Activated CD4-positive, alpha-beta T cell treated with anti-CD3 and anti-CD28 coated beads, Interleukin-2, amount 10 ng/mL, durations not matched to agents 24 days and 14 days (primary cell): ENCODE measurements at regions of chr22 and their contacts with region 1.

Region 1: GRCh38 chr22:50537765-50538164 is 7.9 kb upstream of the KLHDC7B start:
- DNase-seq: no peak
- H3K4me3 Mint-ChIP-seq: peak overlapping the region; percentile 55
- H3K27ac Mint-ChIP-seq: peak overlapping the region; percentile 99
- H3K4me1 Mint-ChIP-seq: peaks cover 75% of the 10 kb centered on the region
- H3K27me3 Mint-ChIP-seq: no peaks in the 10 kb centered on the region

Region 2: DNA sequence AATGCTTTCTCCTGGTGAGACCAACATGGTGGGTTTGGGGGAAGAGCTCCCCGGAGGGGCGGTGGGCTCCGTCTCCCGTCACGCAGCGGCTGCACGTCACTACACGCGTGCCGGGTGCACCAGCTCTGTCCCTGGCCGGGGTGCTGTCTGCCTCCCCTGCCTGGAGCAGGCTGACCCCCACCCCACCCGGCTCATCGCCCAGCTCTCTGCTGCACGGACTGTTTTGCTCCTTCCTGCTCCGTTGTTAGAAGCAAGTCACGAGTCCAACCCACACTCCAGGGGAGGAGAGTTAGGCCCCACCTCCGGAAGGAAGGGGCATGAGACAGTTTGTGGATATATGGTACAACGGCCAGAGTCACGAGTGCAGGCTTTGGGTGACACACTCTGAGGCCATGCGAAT is 1075.0 kb before region 1 on chr22:
- intact Hi-C with region 1: no loop called
- DNase-seq: peak; percentile 64
- H3K4me3 Mint-ChIP-seq: no peak overlapping the region
- H3K27ac Mint-ChIP-seq: no peak overlapping the region
- H3K4me1 Mint-ChIP-seq: peaks cover 2% of the 10 kb centered on the region
- H3K27me3 Mint-ChIP-seq: no peaks in the 10 kb centered on the region

Region 3: DNA sequence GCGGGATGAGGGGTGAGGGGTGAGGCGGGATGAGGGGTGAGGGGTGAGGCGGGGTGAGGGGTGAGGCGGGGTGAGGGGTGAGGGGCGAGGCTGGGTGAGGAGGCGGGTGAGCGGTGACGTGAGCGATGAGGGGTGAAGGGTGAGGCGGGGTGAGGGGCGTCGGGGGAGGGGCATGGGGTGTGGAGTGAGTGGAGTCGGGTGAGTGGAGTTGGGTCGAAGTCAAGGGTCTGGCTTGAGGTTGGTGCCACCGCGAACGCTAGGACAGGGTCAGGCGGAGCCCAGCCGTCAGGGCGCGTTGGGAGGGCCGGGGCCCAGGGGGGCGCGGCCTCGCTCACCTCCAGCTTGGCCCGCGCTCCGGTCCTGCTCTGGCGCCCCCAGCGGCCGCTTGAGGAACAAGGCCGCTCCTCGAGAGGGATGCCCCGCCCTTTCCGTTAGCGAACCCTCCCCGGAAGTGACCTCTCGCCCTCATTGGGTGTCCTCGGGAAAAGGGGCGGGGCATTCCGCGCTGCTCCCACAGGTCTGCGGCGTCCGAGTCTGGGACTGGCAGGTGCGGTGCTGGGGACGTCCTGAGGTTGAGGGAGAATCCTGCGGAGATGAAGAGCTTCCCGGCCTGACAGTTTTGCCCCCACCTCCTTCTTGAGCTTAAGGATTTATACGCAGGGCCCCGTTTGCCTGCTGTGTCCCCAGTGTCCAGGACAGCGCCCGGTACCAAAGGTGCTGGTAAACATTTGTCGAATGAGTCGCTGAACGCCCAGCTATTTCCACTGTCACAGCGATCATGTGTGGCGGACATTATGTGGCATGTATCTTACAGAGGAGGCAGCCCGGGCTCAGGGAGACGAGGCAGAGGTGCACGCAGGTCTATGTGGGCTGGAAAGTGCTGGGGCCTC is 25.0 kb after region 1 on chr22 and contains the start of gene SYCE3:
- intact Hi-C with region 1: loop called (anchors 2 kb)
- DNase-seq: peak; percentile 100
- H3K4me3 Mint-ChIP-seq: peak within 1 kb of the TSS; percentile 94
- H3K27ac Mint-ChIP-seq: peak within 1 kb of the TSS; percentile 85
- H3K4me1 Mint-ChIP-seq: peaks cover 21% of the 10 kb centered on the region
- H3K27me3 Mint-ChIP-seq: peaks cover 14% of the 10 kb centered on the region
- total RNA-seq, gene SYCE3: 0.69 TPM in 1 of 2 replicates, not detected in the other